ENCODE measurements at regions of chr11 and their contacts with region 1.

Region 1: DNA sequence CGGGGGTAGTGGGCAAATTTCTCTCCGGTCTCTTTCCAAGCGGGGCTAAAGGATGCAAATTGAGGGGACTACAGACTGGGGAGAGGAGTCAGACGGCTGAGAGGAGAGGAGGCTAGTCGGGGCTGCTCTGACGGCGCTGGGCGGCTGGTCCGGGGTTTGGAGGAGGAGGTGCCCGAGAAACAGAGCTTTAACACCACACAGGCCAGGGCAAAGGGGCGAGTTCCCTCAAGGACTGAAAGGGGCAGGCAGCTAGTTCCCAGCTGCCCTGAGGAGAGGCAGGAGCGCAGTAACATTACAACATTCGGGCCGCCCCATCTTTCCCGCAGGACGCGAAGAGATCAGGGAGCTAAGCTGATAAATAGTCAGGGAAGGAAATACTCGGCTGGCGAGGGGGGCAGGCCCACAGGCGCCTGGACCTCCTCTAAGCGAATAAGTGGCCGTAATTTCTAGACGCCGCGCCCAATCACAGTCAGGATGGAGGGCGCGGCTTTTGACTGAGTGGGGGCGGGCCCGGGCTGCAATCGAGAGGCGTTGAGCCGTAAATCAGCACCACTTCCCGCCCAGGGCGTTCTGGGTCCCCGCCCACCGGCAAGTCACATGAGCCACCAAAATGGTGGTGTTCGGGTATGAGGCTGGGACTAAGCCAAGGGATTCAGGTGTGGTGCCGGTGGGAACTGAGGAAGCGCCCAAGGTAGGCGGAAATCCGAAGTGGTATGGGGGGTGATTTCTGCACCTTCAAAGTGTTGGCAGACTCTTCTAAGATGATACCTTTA is at the start of gene TMEM126B:
- DNase-seq: peak; percentile 89 to 97 (median 94)
- ATAC-seq: peak; percentile 96
- H3K4me3 ChIP-seq: peak within 1 kb of the TSS; percentile 71
- H3K4me3 Mint-ChIP-seq: peak within 1 kb of the TSS; percentile 96
- H3K27ac ChIP-seq: peak within 1 kb of the TSS; percentile 69 to 83
- H3K27ac Mint-ChIP-seq: peak within 1 kb of the TSS; percentile 92
- H3K4me1 ChIP-seq: peaks cover 13% of the 10 kb centered on the region
- H3K4me1 Mint-ChIP-seq: peaks cover 59% of the 10 kb centered on the region
- H3K27me3 ChIP-seq: no peaks in the 10 kb centered on the region
- H3K27me3 Mint-ChIP-seq: no peaks in the 10 kb centered on the region
- CTCF ChIP-seq: no peak
- total RNA-seq, gene TMEM126B: 16.3 to 16.8 TPM

Region 2: DNA sequence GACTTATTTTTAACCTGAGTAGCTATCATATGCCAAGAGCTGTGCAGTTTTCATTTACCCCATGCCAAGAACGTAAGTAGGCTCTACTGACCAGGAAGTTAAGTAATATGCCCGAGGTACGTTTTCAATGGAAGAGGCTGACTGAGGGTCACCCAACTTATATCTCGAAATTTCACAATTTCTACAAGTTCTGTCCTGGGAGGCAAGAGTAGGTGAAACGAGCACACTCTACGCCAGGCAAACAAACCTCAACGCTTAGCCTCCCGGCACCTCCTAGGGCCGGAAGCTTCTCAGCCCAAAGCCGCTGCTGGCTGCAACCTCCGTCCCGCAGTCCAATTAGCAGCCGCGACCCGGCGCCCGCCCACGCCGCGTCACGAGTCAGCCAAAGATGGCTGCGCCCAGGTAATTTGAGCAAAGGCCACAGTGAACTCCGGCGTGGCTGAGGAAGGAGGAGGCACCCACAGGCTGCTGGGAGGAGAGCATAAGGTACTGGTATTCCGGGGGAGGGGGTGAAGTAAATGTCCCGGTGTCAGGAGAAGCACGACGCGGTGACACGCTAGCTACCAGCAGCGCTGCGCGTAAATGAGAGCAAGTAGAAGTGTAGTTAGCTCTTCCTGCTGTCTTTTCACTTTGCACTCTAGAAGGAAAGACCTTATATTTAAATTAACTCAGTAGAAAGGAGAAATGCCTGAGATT is 19.6 kb after region 1 on chr11 and contains the start of gene TMEM126A:
- CTCF ChIA-PET with region 1: interaction called, 3 read pairs
- POLR2A ChIA-PET with region 1: interaction called, 84 read pairs
- intact Hi-C with region 1: loop called (anchors 1 to 2 kb)
- DNase-seq: peak; percentile 81 to 95 (median 88)
- ATAC-seq: peak; percentile 99
- H3K4me3 ChIP-seq: peak within 1 kb of the TSS; percentile 84
- H3K4me3 Mint-ChIP-seq: peak within 1 kb of the TSS; percentile 97
- H3K27ac ChIP-seq: peak within 1 kb of the TSS; percentile 77 to 84
- H3K27ac Mint-ChIP-seq: peak within 1 kb of the TSS; percentile 89
- H3K4me1 ChIP-seq: peaks cover 20% of the 10 kb centered on the region
- H3K4me1 Mint-ChIP-seq: peaks cover 44% of the 10 kb centered on the region
- H3K27me3 ChIP-seq: peaks cover 0 to 8% of the 10 kb centered on the region in 2 experiments
- H3K27me3 Mint-ChIP-seq: peaks cover 23% of the 10 kb centered on the region
- CTCF ChIP-seq: no peak
- total RNA-seq, gene TMEM126A: 17.0 to 19.5 TPM

Region 3: GRCh38 chr11:85673393-85673792 is 45.2 kb after region 1 on chr11:
- CTCF ChIA-PET with region 1: no interaction called
- POLR2A ChIA-PET with region 1: no interaction called
- intact Hi-C with region 1: no loop called
- DNase-seq: no peak
- ATAC-seq: no peak
- H3K4me3 ChIP-seq: no peak overlapping the region
- H3K4me3 Mint-ChIP-seq: no peak overlapping the region
- H3K27ac ChIP-seq: no peak overlapping the region
- H3K27ac Mint-ChIP-seq: no peak overlapping the region
- H3K4me1 ChIP-seq: no peaks in the 10 kb centered on the region
- H3K4me1 Mint-ChIP-seq: no peaks in the 10 kb centered on the region
- H3K27me3 ChIP-seq: no peaks in the 10 kb centered on the region
- H3K27me3 Mint-ChIP-seq: no peaks in the 10 kb centered on the region
- CTCF ChIP-seq: no peak

Region 4: GRCh38 chr11:85759915-85760314 is 131.7 kb after region 1 on chr11:
- CTCF ChIA-PET with region 1: no interaction called
- POLR2A ChIA-PET with region 1: interaction called, 4 read pairs
- intact Hi-C with region 1: loop called in 1 of 2 experiments (anchors 10 kb)
- DNase-seq: no peak
- ATAC-seq: no peak
- H3K4me3 ChIP-seq: no peak overlapping the region
- H3K4me3 Mint-ChIP-seq: no peak overlapping the region
- H3K27ac ChIP-seq: no peak overlapping the region
- H3K27ac Mint-ChIP-seq: no peak overlapping the region
- H3K4me1 ChIP-seq: peaks cover 41% of the 10 kb centered on the region
- H3K4me1 Mint-ChIP-seq: peaks cover 69% of the 10 kb centered on the region
- H3K27me3 ChIP-seq: no peaks in the 10 kb centered on the region
- H3K27me3 Mint-ChIP-seq: no peaks in the 10 kb centered on the region
- CTCF ChIP-seq: no peak

Region 5: GRCh38 chr11:85826116-85826855 is 198.1 kb after region 1 on chr11:
- CTCF ChIA-PET with region 1: no interaction called
- POLR2A ChIA-PET with region 1: interaction called, 4 read pairs
- intact Hi-C with region 1: loop called in 1 of 2 experiments (anchors 5 kb)
- DNase-seq: peak in 4 of 14 experiments; percentile 26 to 53 (median 48)
- ATAC-seq: no peak
- H3K4me3 ChIP-seq: no peak overlapping the region
- H3K4me3 Mint-ChIP-seq: peak overlapping the region; percentile 22
- H3K27ac ChIP-seq: peak overlapping the region in 1 of 2 donors; percentile 49
- H3K27ac Mint-ChIP-seq: peak overlapping the region; percentile 86
- H3K4me1 ChIP-seq: peaks cover 59% of the 10 kb centered on the region
- H3K4me1 Mint-ChIP-seq: peaks cover 65% of the 10 kb centered on the region
- H3K27me3 ChIP-seq: no peaks in the 10 kb centered on the region
- H3K27me3 Mint-ChIP-seq: no peaks in the 10 kb centered on the region
- CTCF ChIP-seq: peak; percentile 33

Region 6: DNA sequence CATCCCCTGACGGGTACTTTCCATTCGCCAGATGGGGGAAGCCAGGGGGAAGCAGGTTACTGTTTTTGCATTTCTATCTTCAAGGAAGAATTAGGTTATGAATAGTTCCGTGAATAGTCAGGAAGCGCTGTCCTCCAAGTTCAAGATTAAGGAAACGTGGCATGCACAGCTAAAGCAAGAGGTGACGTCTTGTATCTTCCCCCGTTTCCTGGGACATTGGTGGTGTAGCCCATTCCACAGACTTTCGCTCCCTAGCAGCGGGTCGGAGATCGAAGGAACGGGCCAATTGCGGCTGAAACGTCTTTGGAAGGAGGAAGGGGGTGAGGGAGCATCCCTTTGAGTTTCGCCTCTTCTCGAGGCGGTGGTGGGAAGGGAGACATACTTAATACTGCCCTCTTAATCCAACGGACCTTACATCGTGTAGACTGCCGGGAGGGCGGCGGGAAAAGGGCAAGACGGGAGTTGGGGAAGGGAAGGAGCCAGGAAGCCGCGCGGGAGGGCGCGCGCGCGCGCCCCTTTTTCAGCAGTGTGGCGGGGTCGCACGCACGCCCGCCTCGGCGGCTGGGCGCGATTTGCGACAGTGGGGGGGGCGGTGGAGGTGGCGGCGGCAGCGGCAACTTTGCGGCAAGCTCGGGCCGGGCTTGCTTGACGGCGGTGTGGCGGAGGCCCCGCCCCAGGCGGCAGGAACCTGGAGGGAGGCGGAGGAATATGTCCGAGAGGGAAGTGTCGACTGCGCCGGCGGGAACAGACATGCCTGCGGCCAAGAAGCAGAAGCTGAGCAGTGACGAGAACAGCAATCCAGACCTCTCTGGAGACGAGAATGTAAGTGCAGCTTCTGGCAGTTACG is 616.6 kb after region 1 on chr11 and contains the start of gene EED:
- CTCF ChIA-PET with region 1: no interaction called
- POLR2A ChIA-PET with region 1: interaction called, 20 read pairs
- intact Hi-C with region 1: loop called (anchors 1 to 2 kb)
- DNase-seq: peak; percentile 86 to 97 (median 93)
- ATAC-seq: peak; percentile 83
- H3K4me3 ChIP-seq: peak within 1 kb of the TSS; percentile 82
- H3K4me3 Mint-ChIP-seq: no peak within 1 kb of the TSS
- H3K27ac ChIP-seq: peak within 1 kb of the TSS; percentile 99
- H3K27ac Mint-ChIP-seq: no peak within 1 kb of the TSS
- H3K4me1 ChIP-seq: peaks cover 4% of the 10 kb centered on the region
- H3K4me1 Mint-ChIP-seq: no peaks in the 10 kb centered on the region
- H3K27me3 ChIP-seq: no peaks in the 10 kb centered on the region
- H3K27me3 Mint-ChIP-seq: no peaks in the 10 kb centered on the region
- CTCF ChIP-seq: no peak
- total RNA-seq, gene EED: 32.1 to 35.4 TPM

Region 7: DNA sequence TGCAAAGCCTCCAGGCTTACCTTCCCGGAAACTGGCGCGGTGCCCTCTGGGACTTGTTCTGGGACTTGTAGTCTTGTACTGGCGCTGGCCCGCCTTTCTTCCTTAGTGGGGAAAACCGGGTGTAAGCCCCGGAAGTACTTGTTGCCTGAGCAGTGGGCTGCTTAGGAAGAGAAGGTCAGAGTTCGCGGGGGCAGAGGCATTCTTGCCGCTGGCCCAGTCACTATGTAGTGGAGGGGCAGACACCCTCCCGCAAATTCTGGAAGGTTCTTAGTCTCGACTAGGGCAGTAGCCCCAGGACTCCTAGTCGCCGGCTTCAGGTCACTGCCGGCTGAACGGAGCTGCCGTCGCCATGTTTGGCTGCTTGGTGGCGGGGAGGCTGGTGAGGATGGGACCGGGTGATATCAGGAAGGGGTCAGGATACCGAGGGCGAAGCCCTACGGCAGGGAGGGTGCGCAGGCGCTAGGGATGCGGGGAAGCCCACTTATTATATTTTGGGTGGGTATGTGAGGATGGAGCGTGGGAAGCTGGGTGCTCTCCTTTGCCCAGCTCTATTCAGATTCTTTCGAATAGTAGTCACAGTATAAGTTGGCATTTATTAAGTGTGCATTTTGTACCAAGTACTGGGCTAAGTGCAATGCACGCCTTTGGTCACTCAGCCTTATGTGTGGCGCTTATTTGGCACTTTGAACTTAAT is 674.1 kb after region 1 on chr11 and contains the start of gene HIKESHI:
- CTCF ChIA-PET with region 1: no interaction called
- POLR2A ChIA-PET with region 1: no interaction called
- intact Hi-C with region 1: loop called (anchors 5 to 10 kb)
- DNase-seq: peak; percentile 81 to 95 (median 90)
- ATAC-seq: peak; percentile 97
- H3K4me3 ChIP-seq: peak within 1 kb of the TSS; percentile 83
- H3K4me3 Mint-ChIP-seq: peak within 1 kb of the TSS; percentile 99
- H3K27ac ChIP-seq: peak within 1 kb of the TSS; percentile 58 to 85
- H3K27ac Mint-ChIP-seq: peak within 1 kb of the TSS; percentile 98
- H3K4me1 ChIP-seq: peaks cover 3% of the 10 kb centered on the region
- H3K4me1 Mint-ChIP-seq: peaks cover 33% of the 10 kb centered on the region
- H3K27me3 ChIP-seq: no peaks in the 10 kb centered on the region
- H3K27me3 Mint-ChIP-seq: no peaks in the 10 kb centered on the region
- CTCF ChIP-seq: no peak
- total RNA-seq, gene HIKESHI: 6.3 to 6.6 TPM

Region 8: DNA sequence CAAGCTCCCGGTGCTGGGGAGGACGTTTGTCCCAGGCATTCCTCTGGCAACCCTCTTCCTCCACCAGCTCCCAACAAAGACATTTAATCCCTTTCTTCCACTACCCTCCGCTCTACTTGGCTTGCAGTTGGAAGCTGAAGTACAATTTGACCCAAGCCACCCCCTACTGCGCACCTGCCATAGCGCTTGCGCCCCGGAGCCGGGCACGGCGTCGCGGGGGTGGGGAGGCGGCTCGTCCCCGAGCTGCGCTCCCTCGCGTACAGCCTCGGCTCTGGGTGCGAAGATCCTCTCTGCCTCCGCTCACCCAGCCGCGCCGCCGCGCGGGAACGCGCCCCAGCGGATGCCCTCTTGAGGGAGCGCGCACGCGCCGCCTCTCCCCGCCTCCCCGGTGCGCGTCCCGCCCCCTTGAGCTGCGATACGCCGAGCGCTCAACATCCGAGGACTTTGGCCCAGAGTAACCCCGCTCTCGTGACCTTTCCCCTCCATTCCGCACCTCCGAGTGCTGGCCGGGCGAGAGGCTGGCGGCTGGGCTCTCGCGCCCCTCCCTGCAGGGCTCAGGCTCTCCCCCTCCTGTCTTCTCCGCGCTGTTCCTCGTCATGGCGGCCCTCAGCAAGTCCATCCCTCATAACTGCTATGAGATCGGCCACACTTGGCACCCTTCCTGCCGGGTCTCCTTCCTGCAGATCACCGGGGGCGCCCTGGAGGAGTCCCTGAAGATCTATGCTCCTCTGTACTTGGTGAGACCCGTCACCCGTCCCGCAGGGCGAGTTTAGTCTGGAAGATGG is 1409.5 kb after region 1 on chr11 and contains the start of gene TMEM135:
- CTCF ChIA-PET with region 1: no interaction called
- POLR2A ChIA-PET with region 1: no interaction called
- intact Hi-C with region 1: loop called in 1 of 2 experiments (anchors 10 kb)
- DNase-seq: peak; percentile 81 to 95 (median 90)
- ATAC-seq: peak; percentile 95
- H3K4me3 ChIP-seq: peak within 1 kb of the TSS; percentile 95
- H3K4me3 Mint-ChIP-seq: peak within 1 kb of the TSS; percentile 96
- H3K27ac ChIP-seq: peak within 1 kb of the TSS; percentile 39 to 73
- H3K27ac Mint-ChIP-seq: peak within 1 kb of the TSS; percentile 85
- H3K4me1 ChIP-seq: peaks cover 20% of the 10 kb centered on the region
- H3K4me1 Mint-ChIP-seq: peaks cover 57% of the 10 kb centered on the region
- H3K27me3 ChIP-seq: no peaks in the 10 kb centered on the region
- H3K27me3 Mint-ChIP-seq: no peaks in the 10 kb centered on the region
- CTCF ChIP-seq: no peak
- total RNA-seq, gene TMEM135: 14.1 to 15.6 TPM

Measured in CD4-positive, alpha-beta T cell (primary cell).